ENCODE measurements at regions of chr7 and their contacts with region 1.

Region 1: DNA sequence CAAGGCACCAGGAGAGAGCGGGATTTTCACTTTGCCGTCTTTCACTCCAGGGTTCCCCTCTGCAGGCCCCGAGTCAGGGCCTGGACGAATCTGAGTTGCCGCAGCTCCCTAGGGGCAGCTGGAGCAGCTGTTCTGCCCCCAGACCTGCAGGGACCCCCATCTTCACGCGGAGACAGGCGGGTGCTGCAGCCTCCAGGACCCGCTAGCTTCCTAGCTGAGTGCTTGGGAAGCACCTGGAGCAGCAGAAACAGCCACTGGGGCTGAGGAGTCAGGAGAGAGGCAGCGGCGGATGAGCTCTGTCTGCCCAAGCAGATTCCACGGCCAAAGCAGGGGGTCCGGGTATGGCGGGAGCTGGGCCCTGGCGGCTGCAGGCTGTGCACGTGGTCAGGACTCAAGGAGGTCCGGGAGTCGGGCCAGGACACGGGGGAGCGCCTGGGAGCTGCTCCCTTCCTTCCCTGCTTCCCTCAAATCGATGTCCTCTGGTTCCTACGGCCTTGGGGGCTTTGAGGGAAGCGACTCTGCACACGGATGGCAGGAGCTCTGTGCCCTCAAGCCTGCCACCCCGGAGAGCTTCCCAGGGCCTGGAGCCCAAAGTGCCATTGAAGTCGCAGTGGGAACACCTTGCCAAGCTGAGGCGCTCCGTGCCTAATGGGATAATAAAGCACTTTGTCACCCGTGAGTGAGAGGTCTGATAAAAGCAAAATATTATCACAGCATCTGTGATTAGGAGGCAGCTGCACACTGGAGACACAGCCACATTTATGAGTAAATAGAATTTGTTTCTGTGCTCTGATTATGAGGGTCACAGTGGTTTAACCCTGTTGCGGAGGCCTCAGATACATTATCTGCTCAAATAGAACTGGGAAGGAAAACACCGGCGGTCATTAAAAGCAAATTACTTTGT is 17.2 kb downstream of the MNX1 start:
- DNase-seq: no peak
- H3K4me3 Mint-ChIP-seq: no peak overlapping the region
- H3K27ac Mint-ChIP-seq: no peak overlapping the region
- H3K4me1 Mint-ChIP-seq: peaks cover 4% of the 10 kb centered on the region
- H3K27me3 Mint-ChIP-seq: no peaks in the 10 kb centered on the region
- CTCF ChIP-seq: no peak

Region 2: GRCh38 chr7:157165987-157166386 is 172.7 kb after region 1 on chr7:
- CTCF ChIA-PET with region 1: no interaction called
- POLR2A ChIA-PET with region 1: no interaction called
- intact Hi-C with region 1: no loop called
- DNase-seq: no peak
- H3K4me3 Mint-ChIP-seq: no peak overlapping the region
- H3K27ac Mint-ChIP-seq: peak overlapping the region; percentile 59
- H3K4me1 Mint-ChIP-seq: peaks cover 5% of the 10 kb centered on the region
- H3K27me3 Mint-ChIP-seq: no peaks in the 10 kb centered on the region
- CTCF ChIP-seq: no peak

Region 3: GRCh38 chr7:158969196-158969595 is 1975.9 kb after region 1 on chr7:
- CTCF ChIA-PET with region 1: interaction called, 11 read pairs
- POLR2A ChIA-PET with region 1: no interaction called
- intact Hi-C with region 1: no loop called
- DNase-seq: no peak
- H3K4me3 Mint-ChIP-seq: no peak overlapping the region
- H3K27ac Mint-ChIP-seq: no peak overlapping the region
- H3K4me1 Mint-ChIP-seq: no peaks in the 10 kb centered on the region
- H3K27me3 Mint-ChIP-seq: no peaks in the 10 kb centered on the region
- CTCF ChIP-seq: no peak

Measured in MCF 10A (cell line).